PC-9 (cell line): ENCODE measurements at regions of chr12 and their contacts with region 1.

Region 1: GRCh38 chr12:116818948-116819832 is 62.1 kb downstream of the HRK start:
- DNase-seq: peak; percentile 77 to 89
- H3K4me3 ChIP-seq: peak overlapping the region; percentile 88
- H3K27ac ChIP-seq: peak overlapping the region; percentile 84
- H3K4me1 ChIP-seq: peaks cover 15% of the 10 kb centered on the region
- H3K27me3 ChIP-seq: no peaks in the 10 kb centered on the region
- CTCF ChIP-seq: no peak

Region 2: GRCh38 chr12:116737774-116738700 is 81.2 kb before region 1 on chr12 and contains the starts of genes RNFT2 and SPRING1:
- CTCF ChIA-PET with region 1: no interaction called
- POLR2A ChIA-PET with region 1: no interaction called
- intact Hi-C with region 1: loop called (anchors 1 kb)
- DNase-seq: peak; percentile 96 to 99
- H3K4me3 ChIP-seq: peak within 1 kb of the TSS; percentile 89
- H3K27ac ChIP-seq: no peak within 1 kb of the TSS
- H3K4me1 ChIP-seq: peaks cover 14% of the 10 kb centered on the region
- H3K27me3 ChIP-seq: no peaks in the 10 kb centered on the region
- CTCF ChIP-seq: peak; percentile 19; the same call in 1 of the 2 replicates
- total RNA-seq, gene RNFT2: 18.6 and 21.1 TPM in 2 replicates
- total RNA-seq, gene SPRING1: 29.3 and 32.5 TPM in 2 replicates

Region 3: GRCh38 chr12:116861320-116861719 is 42.1 kb after region 1 on chr12:
- CTCF ChIA-PET with region 1: no interaction called
- POLR2A ChIA-PET with region 1: no interaction called
- intact Hi-C with region 1: loop called (anchors 5 kb)
- DNase-seq: no peak
- H3K4me3 ChIP-seq: no peak overlapping the region
- H3K27ac ChIP-seq: no peak overlapping the region
- H3K4me1 ChIP-seq: peaks cover 27% of the 10 kb centered on the region
- H3K27me3 ChIP-seq: no peaks in the 10 kb centered on the region
- CTCF ChIP-seq: no peak

Region 4: DNA sequence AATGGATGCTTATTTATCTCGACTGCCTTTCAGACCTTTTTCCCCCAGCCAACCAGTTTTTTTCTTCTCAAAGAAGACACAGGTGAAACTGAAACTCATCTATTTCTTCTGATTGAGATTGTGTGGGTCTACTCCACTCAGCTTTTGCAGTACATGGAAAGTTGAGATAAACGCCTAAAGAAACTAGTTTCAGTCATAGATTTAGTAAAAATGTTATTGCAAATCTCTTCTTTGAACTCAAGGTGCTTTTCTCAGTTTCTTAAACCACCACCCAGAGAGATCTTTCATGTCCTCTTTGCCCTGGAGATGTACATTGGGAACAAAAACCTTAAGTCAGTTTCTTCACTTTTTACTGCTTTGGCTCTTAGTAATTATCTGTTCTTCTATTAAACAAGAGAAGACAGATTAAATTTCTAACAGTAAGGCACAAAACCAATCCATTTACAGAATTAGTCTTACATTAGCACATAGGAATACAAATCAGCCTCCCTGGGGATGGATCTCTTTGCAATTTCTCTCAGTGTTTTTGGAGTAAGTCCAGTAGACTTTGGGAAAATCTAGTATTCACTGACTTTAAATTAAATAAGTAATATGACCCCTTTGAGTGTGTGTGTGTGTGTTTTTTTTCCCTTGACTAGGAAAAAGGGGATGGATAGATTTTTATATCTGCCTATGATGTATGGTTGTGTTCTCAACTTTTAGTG is 103.2 kb after region 1 on chr12:
- CTCF ChIA-PET with region 1: no interaction called
- POLR2A ChIA-PET with region 1: no interaction called
- intact Hi-C with region 1: no loop called
- DNase-seq: no peak
- H3K4me3 ChIP-seq: no peak overlapping the region
- H3K27ac ChIP-seq: no peak overlapping the region
- H3K4me1 ChIP-seq: peaks cover 27% of the 10 kb centered on the region
- H3K27me3 ChIP-seq: no peaks in the 10 kb centered on the region
- CTCF ChIP-seq: no peak

Region 5: DNA sequence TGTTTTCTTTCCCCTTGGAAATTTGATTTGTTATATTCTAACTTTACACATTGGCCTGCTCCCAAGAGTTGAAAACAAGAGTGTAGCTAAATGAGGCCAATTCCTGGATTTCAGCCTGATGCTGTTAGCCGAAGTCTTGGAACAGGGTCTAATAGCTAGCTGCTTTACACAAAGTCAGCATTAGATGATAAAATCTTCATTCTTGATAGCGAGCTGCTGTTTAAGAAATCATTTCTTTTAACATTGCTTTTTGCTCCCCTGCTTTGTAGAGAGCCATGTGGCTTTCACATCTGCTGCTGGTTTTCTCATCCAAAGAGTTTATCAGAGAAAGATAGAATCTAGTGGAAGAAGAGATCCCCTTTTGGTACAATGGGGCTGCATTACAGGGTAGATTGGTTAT is 113.9 kb after region 1 on chr12:
- CTCF ChIA-PET with region 1: no interaction called
- POLR2A ChIA-PET with region 1: no interaction called
- intact Hi-C with region 1: no loop called
- DNase-seq: no peak
- H3K4me3 ChIP-seq: no peak overlapping the region
- H3K27ac ChIP-seq: no peak overlapping the region
- H3K4me1 ChIP-seq: peaks cover 12% of the 10 kb centered on the region
- H3K27me3 ChIP-seq: no peaks in the 10 kb centered on the region
- CTCF ChIP-seq: no peak